ENCODE measurements at regions of chr5 and their contacts with region 1.

Region 1: DNA sequence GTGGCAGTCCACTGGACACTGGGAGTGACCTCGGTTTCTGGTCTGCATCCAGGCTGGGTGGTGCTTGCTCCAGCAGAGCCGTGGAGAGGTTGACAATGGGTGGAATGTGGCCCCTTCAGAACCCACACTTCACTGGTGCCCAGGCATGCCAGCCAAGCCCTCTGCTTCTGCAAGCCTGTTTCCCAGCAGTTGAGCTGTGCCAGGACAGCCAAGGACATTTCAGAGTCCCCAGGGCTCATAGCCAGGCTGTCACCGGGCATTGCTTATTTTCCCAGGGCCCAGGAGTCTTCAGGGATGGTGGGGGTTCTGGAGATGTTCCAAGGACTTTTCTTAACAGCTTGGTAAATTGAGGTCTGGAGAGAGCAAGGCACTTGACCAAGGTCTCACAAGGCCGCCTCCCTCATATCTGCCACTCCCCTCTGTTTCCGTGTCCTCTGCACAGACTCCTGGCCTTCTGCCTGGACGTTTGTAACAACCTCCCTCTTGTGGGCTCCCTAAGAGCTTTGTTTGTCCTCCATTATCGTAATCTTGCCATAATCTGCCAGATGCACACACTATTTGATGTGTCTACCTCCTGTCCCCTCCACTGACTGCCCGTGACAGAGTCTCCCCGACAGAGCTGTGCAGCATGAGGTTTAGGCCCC is 3.8 kb upstream of the NDST1 start:
- DNase-seq: peak in 4 of 5 donors; percentile 62 to 84 (median 75)
- ATAC-seq: peak; percentile 55 to 76 (median 69)
- H3K4me3 ChIP-seq: no peak overlapping the region
- H3K27ac ChIP-seq: peak overlapping the region; percentile 66 to 92 (median 85)
- H3K4me1 ChIP-seq: peaks cover 30 to 100% (median 97%) of the 10 kb centered on the region in 12 donors
- H3K27me3 ChIP-seq: no peaks in the 10 kb centered on the region
- CTCF ChIP-seq: peak in 2 of 12 donors; percentile 1 to 22
- POLR2A ChIP-seq: no peak

Region 2: GRCh38 chr5:150263801-150264621 is 240.1 kb before region 1 on chr5:
- intact Hi-C with region 1: no loop called
- DNase-seq: peak in 2 of 5 donors; percentile 54 to 55
- ATAC-seq: peak in 3 of 4 donors; percentile 62 to 78 (median 63)
- H3K4me3 ChIP-seq: no peak overlapping the region
- H3K27ac ChIP-seq: no peak overlapping the region
- H3K4me1 ChIP-seq: peaks cover 0 to 9% (median 3%) of the 10 kb centered on the region in 12 donors
- H3K27me3 ChIP-seq: no peaks in the 10 kb centered on the region
- CTCF ChIP-seq: no peak
- POLR2A ChIP-seq: no peak

Region 3: GRCh38 chr5:150514708-150515211 is 10.7 kb after region 1 on chr5:
- intact Hi-C with region 1: loop called in 1 of 10 experiments (anchors 1 kb)
- DNase-seq: peak in 1 of 5 donors; percentile 40
- ATAC-seq: peak in 3 of 4 donors; percentile 12 to 18 (median 17)
- H3K4me3 ChIP-seq: no peak overlapping the region
- H3K27ac ChIP-seq: peak overlapping the region in 9 of 12 donors; percentile 35 to 84 (median 72)
- H3K4me1 ChIP-seq: peaks cover 23 to 98% (median 85%) of the 10 kb centered on the region in 12 donors
- H3K27me3 ChIP-seq: no peaks in the 10 kb centered on the region
- CTCF ChIP-seq: no peak
- POLR2A ChIP-seq: no peak

Region 4: GRCh38 chr5:150523472-150524350 is 19.6 kb after region 1 on chr5:
- intact Hi-C with region 1: loop called in 1 of 10 experiments (anchors 2 kb)
- DNase-seq: peak in 4 of 5 donors; percentile 52 to 57 (median 54)
- ATAC-seq: peak; percentile 18 to 61 (median 46)
- H3K4me3 ChIP-seq: no peak overlapping the region
- H3K27ac ChIP-seq: peak overlapping the region; percentile 53 to 89 (median 72)
- H3K4me1 ChIP-seq: peaks cover 16 to 88% (median 69%) of the 10 kb centered on the region in 12 donors
- H3K27me3 ChIP-seq: no peaks in the 10 kb centered on the region
- CTCF ChIP-seq: peak; percentile 56 to 75 (median 67)
- POLR2A ChIP-seq: no peak

Measured in heart left ventricle (tissue), 16 donors.